IMR-90 (cell line): ENCODE measurements at regions of chr4 and their contacts with region 1.

Region 1: DNA sequence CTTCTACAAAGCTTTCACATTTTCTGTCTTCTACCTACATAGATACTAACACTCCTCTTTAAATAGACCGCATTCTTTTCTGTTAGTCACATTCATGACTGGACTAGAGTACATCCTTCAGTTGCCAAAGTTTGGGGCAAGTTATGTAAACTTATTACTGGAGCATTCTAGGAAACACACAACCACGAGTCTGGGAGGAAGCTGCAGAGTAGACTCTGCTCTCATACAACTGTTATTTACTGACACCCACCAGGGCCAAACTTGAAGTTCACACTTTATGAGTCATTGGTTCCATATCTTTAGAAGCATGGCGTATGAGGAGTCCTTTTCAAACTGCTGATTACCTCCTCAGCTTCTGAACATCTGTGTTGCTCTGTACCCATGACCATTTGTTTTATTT is 87.0 kb downstream of the RNF150 start:
- DNase-seq: peak; percentile 100
- ATAC-seq: peak; percentile 97
- H3K4me3 ChIP-seq: no peak overlapping the region
- H3K27ac ChIP-seq: no peak overlapping the region
- H3K4me1 ChIP-seq: peaks cover 5% of the 10 kb centered on the region; the same call in 1 of the 2 replicates
- H3K27me3 ChIP-seq: no peaks in the 10 kb centered on the region
- CTCF ChIP-seq: no peak
- POLR2A ChIP-seq: no peak; the same call in 1 of the 2 replicates
- RAD21 ChIP-seq: peak; percentile 14; the same call in 1 of the 2 replicates

Region 2: DNA sequence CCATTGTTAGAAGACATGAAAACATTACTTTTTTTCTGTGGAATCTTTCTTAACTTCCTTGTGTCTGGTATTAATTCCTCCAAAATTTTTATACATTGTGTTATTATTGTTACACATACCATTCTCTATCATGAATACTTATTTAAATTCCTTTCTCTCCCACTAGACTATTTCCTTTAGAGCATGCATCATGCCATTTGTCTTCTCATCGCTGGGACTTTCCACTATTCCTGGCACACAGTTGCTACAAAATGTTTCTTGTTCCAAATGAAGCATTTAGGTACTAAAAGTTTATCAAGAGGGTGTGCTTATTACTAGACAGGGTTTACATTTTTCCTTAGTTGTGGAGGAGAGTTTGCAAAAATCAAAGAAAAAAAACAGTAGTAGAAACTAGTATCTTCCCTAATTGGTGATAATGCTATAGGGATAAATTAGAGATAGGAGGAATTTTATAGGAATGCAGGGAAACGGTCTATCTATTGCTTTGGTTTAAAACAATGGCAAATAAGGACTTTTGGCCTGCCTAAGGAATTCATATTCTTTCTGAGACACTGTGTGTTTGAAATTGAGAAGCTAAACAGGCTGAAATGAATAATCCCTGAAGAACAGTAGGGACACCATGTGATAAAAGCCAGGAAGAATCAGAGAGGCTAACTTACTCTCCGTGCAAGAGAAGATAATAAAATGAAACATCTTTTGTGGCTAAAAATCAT is 102.6 kb before region 1 on chr4:
- CTCF ChIA-PET with region 1: no interaction called
- POLR2A ChIA-PET with region 1: no interaction called
- dilution Hi-C with region 1: no loop called
- in situ Hi-C with region 1: no loop called
- intact Hi-C with region 1: loop called (anchors 5 kb)
- DNase-seq: peak; percentile 77
- ATAC-seq: peak; percentile 77
- H3K4me3 ChIP-seq: no peak overlapping the region
- H3K27ac ChIP-seq: no peak overlapping the region
- H3K4me1 ChIP-seq: peaks cover 6% of the 10 kb centered on the region
- H3K27me3 ChIP-seq: no peaks in the 10 kb centered on the region
- CTCF ChIP-seq: no peak
- POLR2A ChIP-seq: no peak
- RAD21 ChIP-seq: no peak

Region 3: DNA sequence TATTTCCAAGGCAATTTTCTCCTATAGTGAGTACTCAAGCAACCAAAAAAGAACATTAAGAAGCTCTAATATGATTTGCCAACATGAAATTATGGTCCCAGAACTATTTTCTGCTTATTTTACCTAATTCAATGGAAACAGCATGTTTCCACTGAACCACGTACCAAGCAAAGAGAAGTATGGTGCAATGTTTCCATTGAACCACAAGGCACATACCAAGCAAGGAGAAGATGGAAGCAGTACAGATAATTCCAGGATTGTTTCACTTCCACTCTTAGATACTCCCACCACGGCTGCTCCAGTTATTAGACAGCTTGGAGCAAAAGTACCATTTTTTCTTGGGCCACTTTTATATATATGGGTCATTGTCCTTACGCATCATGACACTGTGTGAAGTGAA is 77.9 kb before region 1 on chr4:
- CTCF ChIA-PET with region 1: no interaction called
- POLR2A ChIA-PET with region 1: no interaction called
- dilution Hi-C with region 1: no loop called
- in situ Hi-C with region 1: no loop called
- intact Hi-C with region 1: no loop called
- DNase-seq: no peak
- ATAC-seq: no peak
- H3K4me3 ChIP-seq: no peak overlapping the region
- H3K27ac ChIP-seq: no peak overlapping the region
- H3K4me1 ChIP-seq: no peaks in the 10 kb centered on the region
- H3K27me3 ChIP-seq: no peaks in the 10 kb centered on the region
- CTCF ChIP-seq: no peak
- POLR2A ChIP-seq: no peak
- RAD21 ChIP-seq: no peak

Region 4: GRCh38 chr4:140996766-140997165 is 49.5 kb before region 1 on chr4:
- CTCF ChIA-PET with region 1: no interaction called
- POLR2A ChIA-PET with region 1: no interaction called
- dilution Hi-C with region 1: no loop called
- in situ Hi-C with region 1: no loop called
- intact Hi-C with region 1: loop called (anchors 2 kb)
- DNase-seq: peak; percentile 78
- ATAC-seq: peak; percentile 86
- H3K4me3 ChIP-seq: no peak overlapping the region
- H3K27ac ChIP-seq: no peak overlapping the region
- H3K4me1 ChIP-seq: peaks cover 2% of the 10 kb centered on the region; the same call in 1 of the 2 replicates
- H3K27me3 ChIP-seq: no peaks in the 10 kb centered on the region
- CTCF ChIP-seq: peak; percentile 48
- POLR2A ChIP-seq: no peak
- RAD21 ChIP-seq: peak; percentile 48

Region 5: GRCh38 chr4:141065872-141066271 is 19.6 kb after region 1 on chr4:
- CTCF ChIA-PET with region 1: no interaction called
- POLR2A ChIA-PET with region 1: no interaction called
- dilution Hi-C with region 1: no loop called
- in situ Hi-C with region 1: no loop called
- intact Hi-C with region 1: no loop called
- DNase-seq: no peak
- ATAC-seq: no peak
- H3K4me3 ChIP-seq: no peak overlapping the region
- H3K27ac ChIP-seq: no peak overlapping the region
- H3K4me1 ChIP-seq: no peaks in the 10 kb centered on the region
- H3K27me3 ChIP-seq: no peaks in the 10 kb centered on the region
- CTCF ChIP-seq: no peak
- POLR2A ChIP-seq: no peak
- RAD21 ChIP-seq: no peak

Region 6: DNA sequence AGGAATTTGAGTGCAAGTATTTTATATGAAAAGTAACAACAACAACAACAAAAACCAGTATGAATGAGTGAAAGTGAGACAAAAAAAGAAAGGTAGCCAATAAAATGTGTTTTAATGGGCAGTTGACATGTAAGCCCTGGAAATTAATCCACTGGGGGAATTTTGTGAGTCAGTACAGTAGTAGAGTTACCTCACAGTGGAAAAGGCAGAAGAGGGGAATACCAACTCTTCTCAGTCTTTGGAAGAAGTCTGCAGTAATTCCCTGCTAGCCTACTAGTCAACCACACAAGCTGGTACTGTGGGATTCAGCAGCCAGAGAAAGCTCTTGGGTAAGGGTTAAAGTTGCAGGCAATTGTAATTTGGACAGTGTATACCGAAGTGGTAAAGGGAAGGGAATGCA is 513.8 kb after region 1 on chr4:
- CTCF ChIA-PET with region 1: no interaction called
- POLR2A ChIA-PET with region 1: no interaction called
- dilution Hi-C with region 1: no loop called
- in situ Hi-C with region 1: no loop called
- intact Hi-C with region 1: no loop called
- DNase-seq: peak; percentile 52
- ATAC-seq: no peak
- H3K4me3 ChIP-seq: no peak overlapping the region
- H3K27ac ChIP-seq: no peak overlapping the region
- H3K4me1 ChIP-seq: no peaks in the 10 kb centered on the region
- H3K27me3 ChIP-seq: no peaks in the 10 kb centered on the region
- CTCF ChIP-seq: no peak
- POLR2A ChIP-seq: no peak
- RAD21 ChIP-seq: no peak